Activated CD4-positive, alpha-beta memory T cell treated with anti-CD3 and anti-CD28 coated beads for 36 hours (primary cell): ENCODE measurements at regions of chr7 and their contacts with region 1.

Region 1: DNA sequence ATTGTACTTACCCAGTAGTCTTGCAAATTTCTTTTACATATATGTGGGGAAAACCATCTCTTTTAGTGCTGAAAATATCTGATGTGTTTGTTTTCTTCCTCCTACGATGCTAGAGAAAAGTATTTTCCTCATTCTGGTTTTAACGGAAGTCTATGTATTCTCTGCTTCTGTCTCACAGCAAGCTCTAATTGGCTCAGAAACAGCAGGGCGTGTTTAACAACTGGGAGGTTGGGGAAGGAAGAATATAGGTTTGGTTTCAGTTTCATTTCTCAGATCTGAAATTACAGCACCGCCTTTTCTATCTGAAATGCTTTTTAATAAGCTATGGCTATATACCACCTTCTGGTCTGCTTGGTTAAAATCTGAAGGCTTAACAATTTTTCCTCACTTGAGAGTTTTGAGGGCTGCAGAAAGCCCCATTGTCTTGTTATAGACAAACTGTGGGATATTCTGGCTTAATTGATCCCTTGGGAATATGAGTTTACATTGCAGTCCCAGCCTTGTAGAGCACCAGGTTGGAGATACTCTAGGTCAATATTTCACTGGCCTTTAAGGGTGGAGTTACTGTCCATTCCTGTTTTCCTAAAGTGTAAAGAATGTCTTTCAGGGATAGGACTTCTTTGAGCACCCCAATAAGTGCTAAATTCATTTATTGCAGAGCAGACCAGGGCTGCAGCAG is at the start of gene SAMD9:
- DNase-seq: peak; percentile 55
- H3K4me3 Mint-ChIP-seq: peak within 1 kb of the TSS; percentile 69
- H3K27ac Mint-ChIP-seq: peak within 1 kb of the TSS; percentile 69
- H3K4me1 Mint-ChIP-seq: peaks cover 50% of the 10 kb centered on the region
- H3K27me3 Mint-ChIP-seq: no peaks in the 10 kb centered on the region
- total RNA-seq, gene SAMD9: 6.9 to 7.2 TPM

Region 2: GRCh38 chr7:92584996-92585395 is 533.0 kb before region 1 on chr7:
- CTCF ChIA-PET with region 1: no interaction called
- POLR2A ChIA-PET with region 1: no interaction called
- intact Hi-C with region 1: loop called (anchors 5 kb)
- DNase-seq: no peak
- H3K4me3 Mint-ChIP-seq: no peak overlapping the region
- H3K27ac Mint-ChIP-seq: peak overlapping the region; percentile 76
- H3K4me1 Mint-ChIP-seq: peaks cover 58% of the 10 kb centered on the region
- H3K27me3 Mint-ChIP-seq: no peaks in the 10 kb centered on the region

Region 3: DNA sequence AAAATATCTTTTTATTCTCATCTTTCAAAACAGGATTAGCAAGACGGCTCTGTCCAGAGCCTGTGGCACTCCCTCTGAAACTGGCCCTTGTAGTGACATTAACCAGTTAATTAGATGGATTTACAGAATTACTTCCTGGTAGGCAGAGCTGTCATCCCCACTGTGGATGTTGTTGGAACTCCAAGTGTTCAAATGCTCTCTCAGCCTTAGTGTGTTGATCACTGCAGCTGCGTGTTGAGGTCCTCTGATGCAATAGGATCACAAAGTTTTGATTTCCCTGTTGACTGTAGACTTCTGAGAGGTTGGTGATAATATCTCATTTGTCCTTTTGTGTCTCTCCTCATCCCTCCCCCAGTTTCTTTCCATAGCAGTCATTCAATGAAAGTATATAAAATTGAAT is 164.3 kb before region 1 on chr7:
- CTCF ChIA-PET with region 1: no interaction called
- POLR2A ChIA-PET with region 1: no interaction called
- intact Hi-C with region 1: loop called (anchors 5 kb)
- DNase-seq: peak; percentile 31
- H3K4me3 Mint-ChIP-seq: no peak overlapping the region
- H3K27ac Mint-ChIP-seq: peak overlapping the region; percentile 60
- H3K4me1 Mint-ChIP-seq: peaks cover 35% of the 10 kb centered on the region
- H3K27me3 Mint-ChIP-seq: peaks cover 4% of the 10 kb centered on the region

Region 4: GRCh38 chr7:93147363-93147762 is 29.4 kb after region 1 on chr7:
- CTCF ChIA-PET with region 1: no interaction called
- POLR2A ChIA-PET with region 1: interaction called, 4 read pairs
- intact Hi-C with region 1: loop called (anchors 1 kb)
- DNase-seq: peak; percentile 55
- H3K4me3 Mint-ChIP-seq: peak overlapping the region; percentile 84
- H3K27ac Mint-ChIP-seq: peak overlapping the region; percentile 82
- H3K4me1 Mint-ChIP-seq: peaks cover 27% of the 10 kb centered on the region
- H3K27me3 Mint-ChIP-seq: no peaks in the 10 kb centered on the region

Region 5: GRCh38 chr7:93185303-93186027 is 67.5 kb after region 1 on chr7:
- CTCF ChIA-PET with region 1: interaction called, 4 read pairs
- POLR2A ChIA-PET with region 1: no interaction called
- intact Hi-C with region 1: loop called (anchors 1 kb)
- DNase-seq: peak; percentile 28
- H3K4me3 Mint-ChIP-seq: no peak overlapping the region
- H3K27ac Mint-ChIP-seq: no peak overlapping the region
- H3K4me1 Mint-ChIP-seq: peaks cover 9% of the 10 kb centered on the region
- H3K27me3 Mint-ChIP-seq: peaks cover 40% of the 10 kb centered on the region